GM12878 (cell line): ENCODE measurements at regions of chr14 and their contacts with region 1.

Region 1: DNA sequence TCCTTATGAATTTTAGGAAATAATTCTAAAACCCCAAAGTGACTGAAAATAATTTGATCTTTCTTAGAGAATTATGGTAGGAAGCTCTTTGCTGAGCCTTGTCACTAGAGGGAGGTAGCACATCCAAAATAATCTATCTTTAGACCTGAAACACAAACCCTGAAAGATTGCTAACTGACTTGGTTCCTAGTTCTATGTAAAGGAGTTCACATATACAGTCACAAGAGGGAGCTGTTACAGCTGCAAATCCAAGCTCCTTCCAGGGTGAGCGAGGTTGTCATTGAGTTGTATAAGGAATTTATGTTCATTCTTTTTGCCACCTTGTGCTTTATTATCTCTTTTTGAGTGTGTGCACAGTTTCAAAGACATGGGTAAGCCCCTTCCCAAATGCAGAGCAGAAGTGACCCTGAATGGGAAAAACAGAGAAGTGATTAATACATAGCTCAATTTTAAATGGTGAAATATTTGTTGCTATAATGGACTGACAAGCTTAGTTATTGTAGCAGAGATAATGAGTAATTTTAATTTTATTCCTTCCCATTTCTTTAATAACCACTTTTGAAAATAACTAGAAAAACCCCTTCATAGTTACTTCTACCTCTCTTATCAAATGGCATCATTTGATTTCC is 387.9 kb downstream of the DAD1 start:
- DNase-seq: peak; percentile 3
- ATAC-seq: peak; percentile 93
- H3K4me3 ChIP-seq: no peak overlapping the region
- H3K27ac ChIP-seq: no peak overlapping the region
- H3K4me1 ChIP-seq: no peaks in the 10 kb centered on the region
- H3K27me3 ChIP-seq: no peaks in the 10 kb centered on the region; a peak in 1 of 4 replicates
- CTCF ChIP-seq: peak; percentile 64 to 72 (median 65); a peak in 5 of 6 replicates
- EP300 ChIP-seq: no peak
- POLR2A ChIP-seq: no peak
- RAD21 ChIP-seq: peak; percentile 64

Region 2: GRCh38 chr14:22143363-22143762 is 57.7 kb before region 1 on chr14:
- CTCF ChIA-PET with region 1: no interaction called
- POLR2A ChIA-PET with region 1: no interaction called
- RAD21 ChIA-PET with region 1: no interaction called
- SMC1A ChIA-PET with region 1: no interaction called
- in situ Hi-C with region 1: no loop called
- intact Hi-C with region 1: no loop called
- DNase-seq: no peak
- ATAC-seq: no peak
- H3K4me3 ChIP-seq: no peak overlapping the region
- H3K27ac ChIP-seq: no peak overlapping the region
- H3K4me1 ChIP-seq: no peaks in the 10 kb centered on the region
- H3K27me3 ChIP-seq: peaks cover under 1 to 2% of the 10 kb centered on the region in 2 experiments; a peak in 3 of 4 replicates
- CTCF ChIP-seq: no peak
- EP300 ChIP-seq: no peak
- POLR2A ChIP-seq: no peak
- RAD21 ChIP-seq: no peak

Region 3: DNA sequence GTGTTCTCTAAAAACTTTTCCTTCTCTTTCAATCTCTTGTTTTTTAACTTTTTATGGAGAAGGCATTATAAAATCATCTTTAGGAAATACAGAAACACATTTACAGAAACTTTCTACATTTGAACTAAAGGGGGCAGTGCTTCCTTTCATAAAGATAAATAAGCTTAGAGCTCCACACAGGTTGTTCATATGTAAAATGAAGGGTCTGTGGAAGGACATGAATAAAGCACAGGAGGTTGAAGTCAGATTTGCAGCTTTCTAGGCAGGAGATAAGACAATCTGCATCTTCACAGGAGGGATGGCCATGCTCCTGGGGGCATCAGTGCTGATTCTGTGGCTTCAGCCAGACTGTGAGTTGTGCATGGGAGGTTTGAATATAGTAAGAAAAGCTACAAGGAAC is 38.0 kb before region 1 on chr14:
- CTCF ChIA-PET with region 1: interaction called, 25 read pairs
- POLR2A ChIA-PET with region 1: no interaction called
- RAD21 ChIA-PET with region 1: interaction called, 10 read pairs
- SMC1A ChIA-PET with region 1: interaction called, 24 read pairs
- in situ Hi-C with region 1: no loop called
- intact Hi-C with region 1: loop called (anchors 5 kb)
- DNase-seq: no peak
- ATAC-seq: peak; percentile 64
- H3K4me3 ChIP-seq: no peak overlapping the region
- H3K27ac ChIP-seq: no peak overlapping the region
- H3K4me1 ChIP-seq: no peaks in the 10 kb centered on the region
- H3K27me3 ChIP-seq: peaks cover 2% of the 10 kb centered on the region in 2 experiments; a peak in 2 of 4 replicates
- CTCF ChIP-seq: peak in 2 of 3 experiments; percentile 3 to 28; a peak in 3 of 6 replicates
- EP300 ChIP-seq: no peak
- POLR2A ChIP-seq: no peak
- RAD21 ChIP-seq: peak; percentile 40

Region 4: GRCh38 chr14:22177870-22178269 is 23.2 kb before region 1 on chr14:
- CTCF ChIA-PET with region 1: interaction called, 27 read pairs
- POLR2A ChIA-PET with region 1: no interaction called
- RAD21 ChIA-PET with region 1: interaction called, 4 read pairs
- SMC1A ChIA-PET with region 1: interaction called, 8 read pairs
- in situ Hi-C with region 1: no loop called
- intact Hi-C with region 1: no loop called
- DNase-seq: no peak
- ATAC-seq: peak; percentile 65
- H3K4me3 ChIP-seq: no peak overlapping the region
- H3K27ac ChIP-seq: no peak overlapping the region
- H3K4me1 ChIP-seq: peaks cover 18% of the 10 kb centered on the region; the same call in 1 of the 2 replicates
- H3K27me3 ChIP-seq: no peaks in the 10 kb centered on the region; a peak in 1 of 4 replicates
- CTCF ChIP-seq: no peak
- EP300 ChIP-seq: no peak
- POLR2A ChIP-seq: no peak
- RAD21 ChIP-seq: no peak

Region 5: DNA sequence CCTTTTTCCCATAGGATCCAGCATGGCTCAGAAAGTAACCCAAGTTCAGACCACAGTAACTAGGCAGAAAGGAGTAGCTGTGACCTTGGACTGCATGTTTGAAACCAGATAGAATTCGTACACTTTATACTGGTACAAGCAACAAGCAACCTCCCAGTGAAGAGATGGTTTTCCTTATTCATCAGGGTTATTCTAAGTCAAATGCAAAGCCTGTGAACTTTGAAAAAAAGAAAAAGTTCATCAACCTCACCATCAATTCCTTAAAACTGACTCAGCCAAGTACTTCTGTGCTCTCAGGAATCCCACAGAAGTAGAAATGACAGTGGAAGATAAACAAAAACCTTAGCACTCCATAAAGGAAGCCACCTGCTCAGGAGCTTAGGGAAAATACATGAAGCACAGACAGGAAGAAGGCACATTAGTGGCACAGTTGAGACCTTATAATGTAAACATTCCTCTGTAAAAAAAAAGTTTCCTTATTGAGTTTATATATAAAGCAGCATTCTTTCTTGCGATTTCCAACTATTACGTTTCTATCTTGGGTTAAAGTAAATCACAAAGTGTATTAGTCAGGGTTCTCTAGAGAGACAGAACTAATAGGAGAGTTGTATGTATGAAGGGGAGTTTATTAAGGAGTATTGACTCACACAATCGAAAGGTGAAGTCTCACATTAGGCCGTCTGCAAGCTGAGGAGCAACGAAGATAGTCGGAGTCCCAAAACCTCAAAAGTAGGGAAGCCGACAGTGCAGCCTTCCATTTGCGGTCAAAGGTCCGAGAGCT is 10.5 kb before region 1 on chr14:
- CTCF ChIA-PET with region 1: interaction called, 20 read pairs
- POLR2A ChIA-PET with region 1: no interaction called
- RAD21 ChIA-PET with region 1: no interaction called
- SMC1A ChIA-PET with region 1: no interaction called
- in situ Hi-C with region 1: no loop called
- intact Hi-C with region 1: no loop called
- DNase-seq: no peak
- ATAC-seq: no peak
- H3K4me3 ChIP-seq: no peak overlapping the region
- H3K27ac ChIP-seq: no peak overlapping the region
- H3K4me1 ChIP-seq: no peaks in the 10 kb centered on the region
- H3K27me3 ChIP-seq: 0 out of 4 replicates have a peak, but pooled peaks cover 1 to 6% of the 10 kb centered on the region in 2 experiments
- CTCF ChIP-seq: no peak
- EP300 ChIP-seq: no peak
- POLR2A ChIP-seq: no peak
- RAD21 ChIP-seq: no peak

Region 6: DNA sequence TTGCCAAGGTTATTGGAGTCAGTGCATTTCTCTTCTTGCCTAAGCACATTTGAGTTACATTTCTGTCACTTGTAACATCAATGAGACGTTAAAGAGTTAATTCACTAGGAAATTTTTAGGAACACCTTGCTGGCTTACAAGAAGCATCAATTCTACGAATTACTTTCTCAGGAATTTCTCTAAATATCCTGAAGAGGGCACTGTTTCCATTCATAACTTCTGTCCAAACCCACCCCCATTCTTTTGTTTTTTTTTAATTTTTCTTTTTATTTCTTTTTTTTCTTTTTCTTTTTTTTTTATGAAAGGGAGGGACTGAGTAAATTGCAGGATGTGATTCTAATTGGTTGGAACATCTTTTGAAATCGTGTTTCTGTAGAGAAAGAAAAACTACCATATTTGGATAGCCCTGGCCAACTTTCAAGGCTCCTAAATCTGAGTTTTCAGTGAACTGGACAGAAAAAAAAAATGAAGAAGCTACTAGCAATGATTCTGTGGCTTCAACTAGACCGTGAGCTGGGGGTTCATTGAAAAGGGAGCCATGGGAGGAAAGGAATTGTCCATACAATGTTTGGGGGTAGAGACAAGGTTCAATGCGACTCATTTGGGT is 102.6 kb after region 1 on chr14:
- CTCF ChIA-PET with region 1: interaction called, 14 read pairs
- POLR2A ChIA-PET with region 1: no interaction called
- RAD21 ChIA-PET with region 1: interaction called, 4 read pairs
- SMC1A ChIA-PET with region 1: interaction called, 4 read pairs
- in situ Hi-C with region 1: no loop called
- intact Hi-C with region 1: no loop called
- DNase-seq: no peak
- ATAC-seq: no peak
- H3K4me3 ChIP-seq: no peak overlapping the region
- H3K27ac ChIP-seq: no peak overlapping the region
- H3K4me1 ChIP-seq: no peaks in the 10 kb centered on the region
- H3K27me3 ChIP-seq: 0 out of 4 replicates have a peak, but pooled peaks cover 0 to 5% of the 10 kb centered on the region in 2 experiments
- CTCF ChIP-seq: peak; percentile 39 to 48 (median 44); a peak in 4 of 6 replicates
- EP300 ChIP-seq: no peak
- POLR2A ChIP-seq: no peak
- RAD21 ChIP-seq: peak; percentile 61